ENCODE measurements at regions of chr7 and their contacts with region 1.

Region 1: DNA sequence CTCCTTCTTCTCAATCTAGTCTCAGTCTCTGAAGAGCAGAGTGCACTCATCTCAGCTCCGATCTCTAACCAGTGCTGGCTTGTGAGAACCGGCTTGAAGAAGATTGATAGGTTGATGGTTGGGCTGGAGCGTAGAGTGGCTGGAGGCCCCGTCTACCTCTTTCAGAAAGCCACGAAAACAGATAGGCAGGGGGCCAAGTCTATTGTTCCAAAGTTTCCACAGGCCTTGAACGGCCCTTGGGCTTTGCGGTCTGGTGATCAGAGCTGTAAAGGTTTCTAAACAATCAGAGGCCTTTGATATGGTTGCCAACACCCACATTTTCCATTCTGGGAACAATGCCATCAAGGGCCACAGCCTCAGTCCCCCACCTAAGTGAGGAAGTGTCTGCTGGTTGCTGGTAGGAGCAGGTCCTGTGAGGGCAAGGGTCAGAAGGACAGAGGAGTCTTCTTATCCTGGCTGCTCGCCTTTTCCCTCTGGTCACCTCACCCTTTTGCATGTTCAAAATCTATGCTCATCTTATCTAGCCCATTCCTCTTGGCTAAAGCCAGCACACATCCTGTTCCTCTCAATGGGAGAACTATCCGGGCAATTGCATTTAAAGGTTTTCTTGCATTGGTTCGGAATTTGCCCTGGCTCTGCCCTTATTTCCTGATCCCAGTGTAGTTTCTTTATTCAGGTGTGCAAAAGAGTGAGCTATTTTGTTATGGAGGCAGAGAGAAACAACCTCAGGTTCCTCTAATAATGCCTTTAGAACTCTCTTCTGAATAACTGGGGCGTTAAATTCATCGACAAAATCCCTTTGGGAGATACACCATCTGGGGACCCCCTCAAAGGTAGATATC is 70.3 kb upstream of the KMT2E start:
- DNase-seq: peak; percentile 31 to 85 (median 68)
- ATAC-seq: peak; percentile 23
- H3K4me3 ChIP-seq: peak overlapping the region; percentile 40
- H3K4me3 Mint-ChIP-seq: peak overlapping the region; percentile 77 to 95 (median 88)
- H3K27ac ChIP-seq: peak overlapping the region; percentile 87
- H3K27ac Mint-ChIP-seq: peak overlapping the region; percentile 95 to 100 (median 100)
- H3K4me1 ChIP-seq: peaks cover 46 to 50% of the 10 kb centered on the region in 2 donors
- H3K4me1 Mint-ChIP-seq: peaks cover 45 to 79% (median 70%) of the 10 kb centered on the region in 7 donors
- H3K27me3 ChIP-seq: no peaks in the 10 kb centered on the region
- H3K27me3 Mint-ChIP-seq: peaks cover 0 to 2% (median 0%) of the 10 kb centered on the region in 5 donors

Region 2: GRCh38 chr7:104883718-104884452 is 59.8 kb before region 1 on chr7:
- CTCF ChIA-PET with region 1: interaction called, 3 read pairs
- POLR2A ChIA-PET with region 1: no interaction called
- intact Hi-C with region 1: loop called in 1 of 2 experiments (anchors 2 kb)
- DNase-seq: peak; percentile 43 to 79 (median 58)
- ATAC-seq: peak; percentile 92
- H3K4me3 ChIP-seq: no peak overlapping the region
- H3K4me3 Mint-ChIP-seq: peak overlapping the region in 4 of 10 donors; percentile 3 to 56 (median 34)
- H3K27ac ChIP-seq: no peak overlapping the region
- H3K27ac Mint-ChIP-seq: peak overlapping the region in 2 of 9 donors; percentile 12 to 39
- H3K4me1 ChIP-seq: no peaks in the 10 kb centered on the region
- H3K4me1 Mint-ChIP-seq: peaks cover 0 to 18% (median 5%) of the 10 kb centered on the region in 7 donors
- H3K27me3 ChIP-seq: no peaks in the 10 kb centered on the region
- H3K27me3 Mint-ChIP-seq: peaks cover 0 to 11% (median 0%) of the 10 kb centered on the region in 5 donors

Region 3: GRCh38 chr7:105268511-105269392 is 325.0 kb after region 1 on chr7:
- CTCF ChIA-PET with region 1: no interaction called
- POLR2A ChIA-PET with region 1: no interaction called
- intact Hi-C with region 1: loop called in 1 of 2 experiments (anchors 1 kb)
- DNase-seq: peak in 6 of 9 donors; percentile 30 to 58 (median 46)
- ATAC-seq: peak; percentile 83
- H3K4me3 ChIP-seq: peak overlapping the region; percentile 51
- H3K4me3 Mint-ChIP-seq: peak overlapping the region; percentile 85 to 100 (median 94)
- H3K27ac ChIP-seq: peak overlapping the region; percentile 69
- H3K27ac Mint-ChIP-seq: peak overlapping the region; percentile 81 to 96 (median 91)
- H3K4me1 ChIP-seq: peaks cover 13 to 25% of the 10 kb centered on the region in 2 donors
- H3K4me1 Mint-ChIP-seq: peaks cover 34 to 84% (median 71%) of the 10 kb centered on the region in 7 donors
- H3K27me3 ChIP-seq: no peaks in the 10 kb centered on the region
- H3K27me3 Mint-ChIP-seq: no peaks in the 10 kb centered on the region

Region 4: GRCh38 chr7:105388373-105389087 is 444.8 kb after region 1 on chr7 and contains the start of gene SRPK2:
- CTCF ChIA-PET with region 1: no interaction called
- POLR2A ChIA-PET with region 1: no interaction called
- intact Hi-C with region 1: loop called in 1 of 2 experiments (anchors 2 kb)
- DNase-seq: peak; percentile 61 to 79 (median 73)
- ATAC-seq: peak; percentile 86
- H3K4me3 ChIP-seq: peak within 1 kb of the TSS; percentile 77
- H3K4me3 Mint-ChIP-seq: peak within 1 kb of the TSS; percentile 91 to 100 (median 98)
- H3K27ac ChIP-seq: peak within 1 kb of the TSS; percentile 82
- H3K27ac Mint-ChIP-seq: peak within 1 kb of the TSS; percentile 90 to 99 (median 95)
- H3K4me1 ChIP-seq: peaks cover 5 to 12% of the 10 kb centered on the region in 2 donors
- H3K4me1 Mint-ChIP-seq: peaks cover 19 to 46% (median 40%) of the 10 kb centered on the region in 7 donors
- H3K27me3 ChIP-seq: no peaks in the 10 kb centered on the region
- H3K27me3 Mint-ChIP-seq: peaks cover 0 to 2% (median 0%) of the 10 kb centered on the region in 5 donors
- total RNA-seq, gene SRPK2: 45.1 to 56.7 (median 46.8) TPM

Region 5: DNA sequence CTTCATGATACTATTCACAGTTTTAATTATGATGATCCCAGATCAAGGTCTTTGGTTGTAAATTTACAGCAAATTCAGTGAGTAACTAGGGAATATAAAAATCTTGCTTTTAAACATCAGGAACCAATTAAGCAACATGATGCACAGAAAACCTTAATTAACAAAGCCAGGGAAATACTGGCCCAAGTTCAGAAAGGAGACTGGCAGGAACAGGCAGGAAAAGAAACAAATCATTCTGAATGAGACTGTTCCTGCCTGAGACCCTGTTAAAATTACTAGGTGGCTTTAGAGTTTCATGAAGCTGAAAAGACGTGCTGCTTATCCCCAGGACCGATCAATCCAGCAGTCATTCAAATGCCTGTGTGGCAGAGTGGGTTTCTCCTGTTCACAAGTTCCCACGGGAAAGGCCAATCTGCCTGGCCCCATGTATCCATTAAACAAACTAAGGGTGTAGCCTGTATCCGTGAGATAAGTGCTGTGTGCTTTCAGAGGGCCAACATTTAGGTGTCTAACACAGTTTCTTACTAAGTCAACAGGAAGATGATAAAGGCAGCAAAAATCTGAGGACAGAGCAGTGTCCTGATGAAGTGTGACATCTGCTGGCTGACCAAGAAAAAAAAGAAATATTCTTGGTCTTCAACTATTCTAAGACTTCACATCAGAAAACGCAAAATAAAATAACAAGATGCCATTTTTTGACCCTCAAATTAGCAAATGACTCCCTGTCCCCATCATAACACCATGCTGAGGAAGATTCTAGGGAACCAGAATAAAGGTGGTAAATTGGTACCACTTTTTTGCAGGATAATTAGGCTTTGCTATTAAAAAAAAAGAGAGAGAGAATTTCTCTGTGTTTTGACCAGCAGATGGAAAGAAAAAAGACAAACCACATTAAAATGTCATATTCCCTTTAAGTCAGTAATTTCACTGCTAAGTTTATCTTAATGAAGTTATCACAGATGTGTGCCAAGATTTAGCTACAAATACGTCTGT is 544.2 kb after region 1 on chr7:
- CTCF ChIA-PET with region 1: no interaction called
- POLR2A ChIA-PET with region 1: no interaction called
- intact Hi-C with region 1: no loop called
- DNase-seq: peak in 4 of 9 donors; percentile 4 to 31 (median 19)
- ATAC-seq: no peak
- H3K4me3 ChIP-seq: no peak overlapping the region
- H3K4me3 Mint-ChIP-seq: no peak overlapping the region
- H3K27ac ChIP-seq: no peak overlapping the region
- H3K27ac Mint-ChIP-seq: peak overlapping the region in 1 of 9 donors; percentile 20
- H3K4me1 ChIP-seq: no peaks in the 10 kb centered on the region
- H3K4me1 Mint-ChIP-seq: peaks cover 0 to 8% (median 0%) of the 10 kb centered on the region in 7 donors
- H3K27me3 ChIP-seq: no peaks in the 10 kb centered on the region
- H3K27me3 Mint-ChIP-seq: no peaks in the 10 kb centered on the region

Region 6: DNA sequence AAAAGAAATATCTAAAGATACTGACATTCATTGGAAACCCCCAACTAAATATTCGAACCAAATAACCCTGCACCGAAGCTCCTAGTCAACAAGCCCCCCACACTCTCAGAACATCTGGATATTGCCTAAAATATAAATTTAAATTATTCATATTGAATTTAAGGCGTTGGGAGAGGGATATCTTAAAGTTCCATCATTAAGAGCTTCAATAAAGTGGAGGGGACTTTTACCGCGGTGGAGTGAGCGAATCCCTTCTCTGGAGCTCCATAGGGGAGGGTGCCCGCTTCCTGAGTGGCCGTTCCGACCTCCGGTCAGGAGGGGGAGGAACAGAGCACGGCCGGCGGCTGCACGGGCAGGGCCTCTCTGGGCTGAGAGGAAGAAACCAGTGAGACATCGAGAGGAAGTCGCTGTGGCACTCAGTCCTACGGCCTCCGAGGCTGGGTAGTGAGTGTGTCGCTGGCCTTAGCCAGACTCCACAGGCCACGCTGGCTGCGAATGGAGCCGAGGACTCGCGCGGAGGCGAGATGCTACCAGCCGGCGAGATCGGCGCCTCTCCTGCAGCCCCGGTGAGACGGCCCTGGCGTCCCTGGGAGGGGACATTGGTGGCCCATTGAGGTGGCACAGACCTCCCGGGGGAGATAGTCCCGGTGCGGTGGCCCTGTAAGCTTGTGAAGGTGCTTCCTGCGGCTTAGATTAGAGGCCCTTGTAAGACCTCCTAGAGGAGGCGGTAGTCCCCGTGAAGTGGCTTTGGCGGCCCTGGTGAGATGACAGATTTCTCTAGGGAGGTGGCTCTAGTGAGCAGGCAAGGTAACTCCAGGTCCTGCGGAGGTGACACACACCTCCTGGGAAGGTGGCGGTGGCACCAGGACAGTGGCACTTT is 588.3 kb after region 1 on chr7 and contains the start of gene RINT1:
- CTCF ChIA-PET with region 1: no interaction called
- POLR2A ChIA-PET with region 1: interaction called, 9 read pairs
- intact Hi-C with region 1: loop called (anchors 2 to 5 kb)
- DNase-seq: peak; percentile 72 to 90 (median 81)
- ATAC-seq: peak; percentile 97
- H3K4me3 ChIP-seq: peak within 1 kb of the TSS; percentile 86
- H3K4me3 Mint-ChIP-seq: peak within 1 kb of the TSS; percentile 87 to 99 (median 93)
- H3K27ac ChIP-seq: peak within 1 kb of the TSS; percentile 83
- H3K27ac Mint-ChIP-seq: peak within 1 kb of the TSS; percentile 87 to 98 (median 92)
- H3K4me1 ChIP-seq: peaks cover 13 to 18% of the 10 kb centered on the region in 2 donors
- H3K4me1 Mint-ChIP-seq: peaks cover 21 to 59% (median 38%) of the 10 kb centered on the region in 7 donors
- H3K27me3 ChIP-seq: no peaks in the 10 kb centered on the region
- H3K27me3 Mint-ChIP-seq: no peaks in the 10 kb centered on the region
- total RNA-seq, gene RINT1: 23.0 to 31.8 (median 26.0) TPM

Region 7: DNA sequence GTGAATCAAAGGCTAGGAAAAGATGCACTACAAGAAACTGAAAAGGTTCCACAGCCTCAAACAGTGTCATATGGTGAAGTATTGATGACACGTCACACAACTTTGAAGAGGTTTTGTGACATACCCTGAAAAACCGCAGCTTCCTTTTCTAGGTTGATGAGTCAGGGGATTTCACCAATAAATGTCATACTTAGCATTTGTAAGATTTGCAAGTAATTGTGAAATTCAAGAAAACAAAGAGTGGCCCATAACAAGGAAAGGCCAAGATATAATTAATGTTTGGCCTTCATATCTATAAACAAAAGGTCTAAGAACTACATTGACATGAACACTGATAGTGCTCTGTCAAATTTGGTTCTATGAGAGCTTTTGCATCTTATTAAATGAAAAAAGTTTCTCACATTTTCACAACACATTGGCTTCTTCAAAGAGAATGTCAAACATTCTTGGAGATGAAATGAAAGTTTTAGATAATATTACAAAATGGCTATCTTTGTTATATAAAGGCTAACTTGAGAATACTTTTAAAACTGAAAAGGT is 1403.0 kb after region 1 on chr7:
- CTCF ChIA-PET with region 1: no interaction called
- POLR2A ChIA-PET with region 1: no interaction called
- intact Hi-C with region 1: loop called in 1 of 2 experiments (anchors 5 kb)
- DNase-seq: peak in 8 of 9 donors; percentile 28 to 61 (median 50)
- ATAC-seq: peak; percentile 78
- H3K4me3 ChIP-seq: no peak overlapping the region
- H3K4me3 Mint-ChIP-seq: peak overlapping the region in 1 of 10 donors; percentile 47
- H3K27ac ChIP-seq: no peak overlapping the region
- H3K27ac Mint-ChIP-seq: peak overlapping the region in 2 of 9 donors; percentile 19 to 94
- H3K4me1 ChIP-seq: peaks cover 6 to 19% of the 10 kb centered on the region in 2 donors
- H3K4me1 Mint-ChIP-seq: peaks cover 5 to 35% (median 13%) of the 10 kb centered on the region in 7 donors
- H3K27me3 ChIP-seq: no peaks in the 10 kb centered on the region
- H3K27me3 Mint-ChIP-seq: peaks cover 1 to 61% (median 31%) of the 10 kb centered on the region in 5 donors